HEK293T (cell line): ENCODE measurements at regions of chr20 and their contacts with region 1.

Region 1: GRCh38 chr20:64062596-64063388 is at the start of gene TCEA2:
- DNase-seq: peak; percentile 95

Region 2: DNA sequence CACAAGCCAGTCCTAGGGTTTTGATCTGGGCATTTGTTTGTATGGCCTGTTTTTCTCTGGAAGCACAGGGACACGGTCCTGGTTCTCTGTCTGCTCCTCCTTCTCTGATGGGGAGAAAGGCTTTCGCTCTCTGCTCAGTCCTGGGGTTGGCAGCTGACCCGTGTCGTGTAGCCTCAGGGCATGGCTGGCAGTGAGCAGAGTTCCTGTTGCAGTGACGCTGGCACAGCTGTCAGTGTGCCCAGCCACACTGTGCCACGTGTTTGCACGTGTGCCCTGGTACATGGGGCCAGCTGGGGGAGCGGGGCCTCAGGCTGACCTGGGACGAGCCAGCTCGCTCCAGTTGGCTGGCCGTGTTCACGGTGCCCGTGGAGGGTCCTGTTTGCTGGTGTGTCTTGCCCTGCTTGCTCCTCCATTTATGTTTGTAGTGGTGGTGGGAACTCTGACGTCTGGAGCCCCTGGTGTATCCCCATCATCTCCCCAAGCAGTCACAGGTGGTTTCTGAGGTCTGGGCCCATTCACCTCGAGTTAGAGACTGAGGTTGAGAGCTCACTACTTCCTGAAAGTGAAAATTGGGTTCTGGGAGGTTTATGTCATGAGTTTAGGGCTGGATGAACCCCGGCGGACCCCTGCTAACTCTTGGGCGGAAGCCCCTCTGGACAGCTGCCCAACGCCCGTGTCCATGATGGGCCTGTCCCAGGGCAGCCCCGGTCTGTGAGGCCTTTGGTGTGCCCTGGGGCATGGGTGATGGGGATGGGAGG is 178.1 kb before region 1 on chr20:
- CTCF ChIA-PET with region 1: no interaction called
- POLR2A ChIA-PET with region 1: no interaction called
- DNase-seq: no peak

Region 3: GRCh38 chr20:63967640-63968394 is 95.0 kb before region 1 on chr20:
- CTCF ChIA-PET with region 1: no interaction called
- POLR2A ChIA-PET with region 1: no interaction called
- DNase-seq: no peak

Region 4: DNA sequence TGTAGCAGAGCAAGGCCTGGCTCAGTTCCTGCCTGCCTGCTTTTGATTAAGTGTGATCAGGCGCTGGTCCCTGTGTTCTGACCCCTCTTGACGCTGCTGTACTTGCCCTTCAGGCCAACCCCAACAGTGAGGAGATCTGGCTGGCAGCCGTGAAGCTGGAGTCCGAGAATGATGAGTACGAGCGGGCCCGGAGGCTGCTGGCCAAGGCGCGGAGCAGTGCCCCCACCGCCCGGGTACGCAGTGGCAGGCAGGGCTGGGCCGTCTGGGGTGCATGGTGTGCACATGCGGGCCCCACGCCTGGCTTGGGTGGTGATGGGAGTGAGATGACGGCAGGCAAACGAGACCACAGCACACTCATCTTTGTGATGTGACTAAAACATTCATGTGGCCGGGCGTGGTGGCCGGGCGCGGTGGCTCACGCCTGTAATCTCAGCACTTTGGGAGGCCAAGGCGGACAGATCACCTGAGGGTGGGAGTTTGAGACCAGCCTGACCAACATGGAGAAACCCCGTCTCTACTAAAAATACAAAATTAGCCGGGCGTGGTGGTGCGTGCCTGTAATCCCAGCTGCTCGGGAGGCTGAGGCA is 36.9 kb before region 1 on chr20:
- CTCF ChIA-PET with region 1: no interaction called
- POLR2A ChIA-PET with region 1: no interaction called
- DNase-seq: no peak

Region 5: GRCh38 chr20:64038565-64039292 is 24.1 kb before region 1 on chr20:
- CTCF ChIA-PET with region 1: interaction called, 10 read pairs
- POLR2A ChIA-PET with region 1: interaction called, 6 read pairs
- DNase-seq: peak; percentile 88

Region 6: GRCh38 chr20:64079273-64080012 is 16.7 kb after region 1 on chr20 and contains the start of gene RGS19:
- CTCF ChIA-PET with region 1: interaction called, 3 read pairs
- POLR2A ChIA-PET with region 1: interaction called, 38 read pairs
- DNase-seq: peak; percentile 82

Region 7: DNA sequence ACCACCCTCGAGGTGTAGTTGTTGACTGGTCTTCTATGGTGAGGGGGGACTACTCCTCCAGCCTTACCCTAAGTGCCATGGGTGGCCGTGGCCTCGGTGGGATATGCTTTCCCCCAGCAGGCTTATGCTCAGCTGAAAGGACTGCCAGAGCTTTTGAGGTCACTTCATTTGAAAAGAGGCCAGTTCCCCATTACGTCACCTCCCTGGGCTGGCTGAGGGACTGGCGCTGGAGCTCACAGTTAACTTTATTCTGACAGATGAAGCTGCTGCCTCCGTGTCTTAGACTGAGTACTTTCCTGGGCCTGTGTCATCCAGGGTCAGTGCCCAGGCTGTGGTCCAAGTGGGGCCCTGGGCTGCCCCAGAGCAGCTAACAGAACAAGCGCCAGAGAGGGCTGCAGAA is 150.0 kb after region 1 on chr20:
- CTCF ChIA-PET with region 1: no interaction called
- POLR2A ChIA-PET with region 1: no interaction called
- DNase-seq: no peak